GM13976 (cell line): ENCODE measurements at regions of chr1 and their contacts with region 1.

Region 1: DNA sequence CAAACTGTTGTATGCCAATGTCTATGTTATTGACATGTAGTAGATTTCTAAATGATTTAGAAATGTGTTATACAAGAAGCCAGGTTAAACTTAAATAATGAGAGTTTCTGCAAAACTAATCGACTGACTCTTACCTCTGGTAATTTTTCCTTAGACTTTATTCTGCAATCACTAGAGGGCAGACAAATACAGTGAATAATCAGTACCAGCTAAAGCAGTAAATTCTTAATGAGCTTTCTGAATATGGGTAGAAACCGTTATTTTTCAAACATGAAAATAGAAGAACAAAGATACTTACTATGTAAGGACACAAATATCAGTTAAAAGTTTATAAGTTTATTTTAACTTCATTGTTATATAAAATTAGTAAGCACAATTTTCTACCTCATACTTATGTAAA is 97.9 kb upstream of the RGS1 start:
- DNase-seq: peak; percentile 41
- CTCF ChIP-seq: peak; percentile 27

Region 2: DNA sequence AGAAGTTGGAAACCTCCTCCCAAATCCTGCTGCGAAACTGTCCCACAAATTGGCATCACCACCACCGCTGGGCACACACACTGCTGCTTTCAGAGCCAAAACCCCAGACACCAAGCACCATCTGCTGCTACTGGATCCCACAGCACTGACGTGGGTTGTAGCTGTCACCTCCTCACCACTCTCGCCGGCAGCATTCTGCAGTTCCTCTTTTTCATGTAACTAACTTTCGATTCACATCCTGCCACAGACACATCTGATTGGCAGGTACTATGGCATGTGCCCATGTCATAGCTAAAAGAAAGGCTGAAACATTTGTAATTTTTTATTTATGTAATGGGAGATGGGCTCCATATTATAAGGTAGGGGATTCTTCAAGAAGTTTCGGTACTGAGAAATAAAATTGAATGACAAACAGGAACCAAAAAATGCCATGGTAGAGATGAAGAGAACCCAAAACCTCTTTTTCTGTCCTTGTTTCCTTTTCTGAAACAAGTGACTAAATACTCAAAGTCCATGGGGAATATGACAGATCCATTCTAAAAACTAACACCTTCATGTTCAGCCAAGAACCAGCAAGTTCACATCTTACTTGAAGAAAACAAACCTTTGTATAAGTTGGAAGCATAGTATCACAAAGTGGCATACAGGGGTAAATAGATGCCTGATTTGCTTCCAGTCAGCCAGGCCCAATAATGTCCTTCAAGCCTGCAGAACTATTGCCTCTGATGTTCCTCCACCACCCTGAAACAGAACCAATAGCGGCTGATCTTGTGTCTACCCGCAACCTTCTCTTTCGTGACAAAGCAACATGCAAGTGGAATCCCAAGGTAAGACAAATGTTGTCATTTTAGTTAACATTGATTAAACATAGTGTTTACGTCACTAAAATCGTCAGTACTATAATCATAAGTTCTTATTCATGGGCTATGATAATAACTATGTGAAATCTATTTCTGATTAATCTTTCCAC is 131.8 kb after region 1 on chr1:
- in situ Hi-C with region 1: loop called (anchors 5 kb)
- DNase-seq: peak; percentile 64
- CTCF ChIP-seq: peak; percentile 39

Region 3: DNA sequence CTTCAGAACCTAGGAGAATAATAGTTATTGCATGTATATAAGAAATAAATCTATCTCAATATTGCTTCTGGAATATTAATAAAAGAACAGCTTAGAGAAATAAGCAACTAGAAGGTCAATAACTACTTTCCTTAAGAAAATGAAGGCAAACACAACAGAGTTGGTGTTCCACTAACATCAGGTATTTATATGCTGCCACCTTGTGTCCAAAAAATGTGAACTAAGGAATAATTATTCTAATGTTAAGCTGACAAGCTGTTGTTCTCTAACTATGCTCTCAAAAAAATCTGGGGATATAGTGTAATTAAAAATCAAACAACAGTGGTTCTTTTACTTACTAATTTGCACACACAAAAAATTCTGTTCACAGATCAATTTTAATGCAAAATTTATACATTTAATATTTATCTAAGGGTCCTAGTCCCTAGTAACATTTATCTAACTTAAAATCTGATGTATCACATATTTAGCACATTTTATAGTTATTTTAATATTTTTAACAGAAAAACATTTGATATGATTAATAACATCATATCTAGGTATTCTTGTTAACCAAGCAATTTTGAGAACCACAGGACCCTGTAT is 541.9 kb after region 1 on chr1:
- in situ Hi-C with region 1: loop called (anchors 10 kb)
- DNase-seq: peak; percentile 18
- CTCF ChIP-seq: peak; percentile 11